ENCODE measurements at regions of chr10 and their contacts with region 1.

Region 1: GRCh38 chr10:77494327-77494726 is 143.3 kb downstream of the KCNMA1 start:
- DNase-seq: no peak
- ATAC-seq: no peak
- H3K4me3 ChIP-seq: no peak overlapping the region
- H3K27ac ChIP-seq: peak overlapping the region; percentile 79 to 94 (median 90)
- H3K4me1 ChIP-seq: peaks cover 76 to 81% of the 10 kb centered on the region in 2 donors
- H3K27me3 ChIP-seq: no peaks in the 10 kb centered on the region
- CTCF ChIP-seq: peak; percentile 28 to 46 (median 37)
- POLR2A ChIP-seq: no peak

Region 2: DNA sequence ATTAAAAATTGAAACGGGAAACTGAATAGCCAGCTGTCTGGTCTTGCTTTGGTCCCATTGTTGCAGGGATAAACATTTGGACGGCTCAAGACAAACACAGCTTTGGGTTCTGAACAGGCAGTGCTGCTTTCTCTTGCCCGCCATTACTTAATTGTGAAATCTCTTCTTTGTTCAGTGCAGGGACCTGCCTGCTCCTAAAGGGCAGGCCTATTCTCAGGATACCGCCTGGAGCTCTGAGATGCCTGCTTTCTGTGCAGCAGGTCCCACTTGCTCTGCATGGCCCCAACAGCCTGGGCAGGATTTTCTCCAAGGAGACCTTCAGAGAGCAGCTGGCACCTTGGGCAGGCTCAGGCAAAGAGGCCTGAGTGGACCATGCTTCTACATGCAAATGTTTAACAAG is 94.3 kb before region 1 on chr10:
- in situ Hi-C with region 1: no loop called
- intact Hi-C with region 1: loop called (anchors 5 kb)
- DNase-seq: no peak
- ATAC-seq: peak; percentile 15 to 17
- H3K4me3 ChIP-seq: no peak overlapping the region
- H3K27ac ChIP-seq: peak overlapping the region; percentile 68 to 80 (median 69)
- H3K4me1 ChIP-seq: peaks cover 50 to 53% of the 10 kb centered on the region in 2 donors
- H3K27me3 ChIP-seq: no peaks in the 10 kb centered on the region
- CTCF ChIP-seq: no peak
- POLR2A ChIP-seq: no peak

Region 3: DNA sequence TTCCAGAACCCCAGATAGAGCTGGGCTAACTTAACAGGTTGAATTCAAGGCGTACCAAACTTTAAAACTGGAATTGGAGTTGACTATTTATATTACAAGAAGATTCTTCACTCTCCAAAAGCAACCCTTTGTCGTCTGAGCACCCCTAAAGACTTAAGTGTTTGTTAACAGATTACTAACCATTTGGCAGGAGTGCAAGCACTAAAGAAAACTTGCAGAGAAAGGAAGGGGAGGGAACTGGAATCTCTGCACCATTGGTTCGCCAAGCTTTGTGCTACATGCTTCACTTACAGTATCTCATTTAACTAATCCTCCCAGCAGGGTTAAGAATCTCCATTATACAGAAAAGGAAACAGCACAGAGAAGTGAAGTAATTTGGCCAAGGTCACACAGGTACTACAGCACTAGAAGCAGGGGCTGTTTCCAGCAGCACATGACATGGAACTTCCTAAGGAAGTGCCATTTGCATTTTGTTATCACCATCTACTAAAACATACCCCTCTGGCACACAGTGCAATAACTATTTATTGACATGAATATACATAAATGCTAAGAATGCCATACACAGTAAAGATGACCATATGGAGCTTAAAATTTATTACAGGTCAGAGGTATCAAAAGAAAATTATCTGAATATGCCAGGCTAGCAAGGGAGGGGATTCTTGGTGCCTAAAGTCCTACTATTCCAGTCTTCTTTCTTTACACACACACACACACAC is 57.9 kb before region 1 on chr10:
- in situ Hi-C with region 1: no loop called
- intact Hi-C with region 1: no loop called
- DNase-seq: no peak
- ATAC-seq: no peak
- H3K4me3 ChIP-seq: no peak overlapping the region
- H3K27ac ChIP-seq: no peak overlapping the region
- H3K4me1 ChIP-seq: no peaks in the 10 kb centered on the region
- H3K27me3 ChIP-seq: no peaks in the 10 kb centered on the region
- CTCF ChIP-seq: no peak
- POLR2A ChIP-seq: no peak

Region 4: GRCh38 chr10:77548151-77548550 is 53.8 kb after region 1 on chr10:
- in situ Hi-C with region 1: no loop called
- intact Hi-C with region 1: loop called (anchors 2 kb)
- DNase-seq: peak; percentile 96 to 99
- ATAC-seq: peak; percentile 87 to 89
- H3K4me3 ChIP-seq: no peak overlapping the region
- H3K27ac ChIP-seq: peak overlapping the region; percentile 79 to 93 (median 88)
- H3K4me1 ChIP-seq: peaks cover 56 to 57% of the 10 kb centered on the region in 2 donors
- H3K27me3 ChIP-seq: no peaks in the 10 kb centered on the region
- CTCF ChIP-seq: no peak
- POLR2A ChIP-seq: peak in 1 of 2 donors; percentile 42

Region 5: DNA sequence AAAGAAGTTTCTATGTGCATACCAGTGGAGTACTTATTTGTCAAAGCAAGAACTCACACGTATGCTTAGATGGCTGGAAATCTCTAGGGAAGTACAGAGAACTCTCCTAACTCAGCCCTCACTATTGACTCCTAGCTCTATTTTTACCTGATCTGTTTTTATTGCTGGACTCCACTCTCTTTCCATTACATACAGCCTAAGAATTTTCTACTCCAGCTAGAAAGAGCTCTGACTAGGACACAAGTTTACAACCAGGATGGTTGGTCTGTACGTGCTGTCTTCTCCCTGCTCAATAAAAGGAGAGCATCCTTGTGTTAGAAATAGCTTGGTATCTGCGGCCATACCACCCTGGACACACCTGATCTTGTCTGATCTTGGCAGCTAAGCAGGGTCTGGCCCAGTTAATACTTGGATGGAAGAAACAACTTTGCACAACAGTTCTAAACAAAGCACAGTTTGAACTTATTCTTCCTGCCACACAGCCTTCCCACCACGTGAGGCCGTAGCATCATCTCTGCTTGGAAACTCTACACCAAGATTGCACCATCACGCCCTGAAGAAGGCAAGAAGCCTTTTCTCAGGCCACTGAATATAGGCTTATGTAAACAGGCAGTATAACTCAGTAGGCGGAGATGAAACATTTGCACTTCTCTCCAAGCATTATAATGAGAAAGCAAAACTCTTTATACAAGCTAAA is 92.5 kb after region 1 on chr10:
- in situ Hi-C with region 1: no loop called
- intact Hi-C with region 1: loop called (anchors 1 kb)
- DNase-seq: peak; percentile 89 to 97
- ATAC-seq: peak; percentile 84
- H3K4me3 ChIP-seq: no peak overlapping the region
- H3K27ac ChIP-seq: peak overlapping the region; percentile 94 to 99 (median 96)
- H3K4me1 ChIP-seq: peaks cover 53 to 63% of the 10 kb centered on the region in 2 donors
- H3K27me3 ChIP-seq: no peaks in the 10 kb centered on the region
- CTCF ChIP-seq: no peak
- POLR2A ChIP-seq: peak; percentile 47 to 72

Measured in gastrocnemius medialis (tissue), 4 donors.